Activated CD4-positive, alpha-beta T cell treated with anti-CD3 and anti-CD28 coated beads for 36 hours (primary cell): ENCODE measurements at regions of chr20 and their contacts with region 1.

Region 1: DNA sequence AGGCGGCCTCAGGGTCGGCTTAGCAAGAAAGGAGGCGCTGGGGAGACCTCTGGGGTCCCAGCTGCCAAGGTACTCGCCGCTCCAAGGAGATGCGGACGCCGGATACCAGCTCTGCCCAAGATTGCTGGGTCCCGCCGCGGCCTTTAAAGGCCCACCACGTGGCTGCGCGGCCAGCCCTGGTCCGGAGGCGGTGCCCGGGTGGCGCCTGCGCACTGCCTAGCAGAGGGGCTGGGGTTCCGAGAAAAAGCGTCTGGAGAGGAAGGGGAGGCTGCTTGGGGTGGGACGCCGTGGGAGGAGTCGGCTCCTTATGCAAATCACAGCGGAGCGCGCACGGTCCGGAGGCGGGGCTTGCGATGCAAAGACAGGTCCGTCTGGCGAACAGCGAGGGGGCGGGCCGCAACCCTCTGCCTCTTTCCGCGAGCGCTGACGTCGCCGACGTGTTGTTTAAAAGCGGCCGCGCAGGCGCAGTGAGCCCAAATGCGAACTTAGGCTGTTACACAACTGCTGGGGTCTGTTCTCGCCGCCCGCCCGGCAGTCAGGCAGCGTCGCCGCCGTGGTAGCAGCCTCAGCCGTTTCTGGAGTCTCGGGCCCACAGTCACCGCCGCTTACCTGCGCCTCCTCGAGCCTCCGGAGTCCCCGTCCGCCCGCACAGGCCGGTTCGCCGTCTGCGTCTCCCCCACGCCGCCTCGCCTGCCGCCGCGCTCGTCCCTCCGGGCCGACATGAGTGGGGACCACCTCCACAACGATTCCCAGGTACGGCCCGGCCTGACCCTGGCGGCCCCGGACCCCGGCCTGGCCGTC is at the start of gene TOP1:
- DNase-seq: peak; percentile 100
- ATAC-seq: peak; percentile 98
- H3K4me3 Mint-ChIP-seq: peak within 1 kb of the TSS; percentile 84
- H3K27ac Mint-ChIP-seq: peak within 1 kb of the TSS; percentile 92
- H3K4me1 Mint-ChIP-seq: peaks cover 45% of the 10 kb centered on the region
- H3K27me3 Mint-ChIP-seq: no peaks in the 10 kb centered on the region
- total RNA-seq, gene TOP1: 111 to 124 TPM

Region 2: DNA sequence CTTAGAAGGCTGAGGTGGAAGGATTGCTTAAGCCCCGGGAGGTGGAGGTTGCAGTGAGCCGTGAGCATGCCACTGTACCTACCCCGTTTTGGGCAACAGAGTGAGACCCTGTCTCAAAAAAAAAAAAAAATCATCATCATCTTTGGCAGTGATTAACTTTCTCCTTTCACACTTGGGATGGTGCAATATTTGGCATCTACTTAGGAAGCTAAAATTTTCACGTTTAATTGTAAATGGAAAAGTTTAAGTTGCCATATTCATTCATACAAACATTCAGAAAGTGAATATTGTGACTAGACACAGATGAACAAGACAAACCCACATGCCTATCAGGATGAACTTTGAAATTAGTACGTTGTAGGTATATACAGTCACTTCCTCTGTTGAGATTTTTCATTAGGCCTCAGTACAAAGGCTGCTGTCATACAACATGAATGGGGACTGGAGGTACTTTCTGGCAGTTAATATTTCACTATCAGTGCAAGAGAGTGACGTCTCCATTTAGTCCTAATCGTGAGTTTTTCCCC is 10.4 kb after region 1 on chr20:
- CTCF ChIA-PET with region 1: interaction called, 39 read pairs
- POLR2A ChIA-PET with region 1: no interaction called
- intact Hi-C with region 1: loop called in 1 of 2 experiments (anchors 1 kb)
- DNase-seq: no peak
- ATAC-seq: peak; percentile 96
- H3K4me3 Mint-ChIP-seq: no peak overlapping the region
- H3K27ac Mint-ChIP-seq: peak overlapping the region; percentile 79
- H3K4me1 Mint-ChIP-seq: peaks cover 86% of the 10 kb centered on the region
- H3K27me3 Mint-ChIP-seq: no peaks in the 10 kb centered on the region

Region 3: DNA sequence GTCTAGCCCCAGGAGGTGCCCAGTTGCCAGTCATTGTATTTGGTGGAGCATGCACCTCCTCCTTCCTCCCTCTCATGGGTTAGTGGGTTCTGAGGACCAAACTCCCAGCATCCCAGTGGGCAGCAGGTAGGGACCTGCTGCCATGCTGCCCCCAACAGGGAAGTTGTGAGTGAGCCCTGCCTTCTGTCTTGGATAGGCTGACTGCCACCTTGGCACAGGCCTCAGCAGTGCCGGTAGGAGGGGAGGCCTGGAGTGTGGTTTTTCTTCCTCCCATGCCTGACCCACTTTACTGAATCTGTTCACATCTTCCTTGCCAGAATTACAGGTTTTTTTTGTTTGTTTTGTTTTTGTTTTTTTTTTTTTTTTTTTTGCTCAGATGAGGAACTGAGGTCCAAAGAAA is 133.3 kb after region 1 on chr20:
- CTCF ChIA-PET with region 1: interaction called, 4 read pairs
- POLR2A ChIA-PET with region 1: interaction called, 3 read pairs
- intact Hi-C with region 1: loop called in 1 of 2 experiments (anchors 1 kb)
- DNase-seq: no peak
- ATAC-seq: no peak
- H3K4me3 Mint-ChIP-seq: no peak overlapping the region
- H3K27ac Mint-ChIP-seq: peak overlapping the region; percentile 72
- H3K4me1 Mint-ChIP-seq: peaks cover 59% of the 10 kb centered on the region
- H3K27me3 Mint-ChIP-seq: no peaks in the 10 kb centered on the region

Region 4: GRCh38 chr20:41617931-41618806 is 589.6 kb after region 1 on chr20 and contains the start of gene CHD6:
- CTCF ChIA-PET with region 1: no interaction called
- POLR2A ChIA-PET with region 1: no interaction called
- intact Hi-C with region 1: loop called in 1 of 2 experiments (anchors 1 kb)
- DNase-seq: peak; percentile 99
- ATAC-seq: peak; percentile 99
- H3K4me3 Mint-ChIP-seq: peak within 1 kb of the TSS; percentile 75
- H3K27ac Mint-ChIP-seq: peak within 1 kb of the TSS; percentile 75
- H3K4me1 Mint-ChIP-seq: peaks cover 42% of the 10 kb centered on the region
- H3K27me3 Mint-ChIP-seq: no peaks in the 10 kb centered on the region
- total RNA-seq, gene CHD6: 30.2 to 34.0 TPM